Activated CD4-positive, alpha-beta T cell treated with anti-CD3 and anti-CD28 coated beads for 36 hours (primary cell): ENCODE measurements at regions of chr12 and their contacts with region 1.

Region 1: GRCh38 chr12:55996715-55997534 is at the start of gene SUOX:
- DNase-seq: peak; percentile 65
- ATAC-seq: peak; percentile 87
- H3K4me3 Mint-ChIP-seq: peak within 1 kb of the TSS; percentile 56
- H3K27ac Mint-ChIP-seq: peak within 1 kb of the TSS; percentile 37
- H3K4me1 Mint-ChIP-seq: peaks cover 20% of the 10 kb centered on the region
- H3K27me3 Mint-ChIP-seq: peaks cover 3% of the 10 kb centered on the region
- total RNA-seq, gene SUOX: 2.9 to 3.4 TPM

Region 2: DNA sequence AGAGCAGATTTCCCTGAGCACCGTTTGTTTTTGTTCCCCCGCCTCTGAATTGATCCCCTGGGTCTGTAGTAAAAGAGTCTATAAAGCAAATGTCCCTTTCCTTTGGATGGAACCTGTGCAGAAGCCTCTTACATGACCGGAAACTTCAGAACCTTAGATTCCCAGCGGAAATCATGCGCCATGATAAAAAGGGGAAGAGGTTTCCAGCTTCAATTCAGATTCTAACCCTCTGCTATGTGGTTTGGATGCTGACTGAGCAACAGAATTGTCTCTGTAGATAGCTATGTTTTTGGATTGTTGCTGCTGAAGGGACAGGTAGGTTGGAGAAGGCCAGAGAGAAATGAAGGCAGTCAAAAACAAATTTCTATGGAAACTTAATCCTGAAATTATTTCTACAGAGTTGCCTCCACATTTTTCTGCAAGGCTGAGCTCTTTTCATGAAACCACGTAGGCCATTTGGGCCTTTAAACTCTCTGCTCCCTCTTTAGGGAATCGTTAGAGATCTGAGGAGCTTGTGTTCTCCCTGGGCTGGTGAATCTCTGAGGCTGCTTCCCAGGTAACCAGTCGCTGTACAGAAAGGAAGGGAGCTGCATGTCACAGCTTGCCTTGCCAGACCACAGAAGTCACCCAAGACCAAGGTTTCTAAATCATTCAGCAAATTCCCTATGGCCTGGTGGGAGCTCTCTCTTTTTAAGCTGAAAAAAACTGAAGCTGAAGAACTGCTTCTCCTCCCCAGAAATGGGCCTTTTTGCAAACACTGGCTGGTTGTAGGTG is 388.9 kb before region 1 on chr12:
- CTCF ChIA-PET with region 1: no interaction called
- POLR2A ChIA-PET with region 1: no interaction called
- intact Hi-C with region 1: no loop called
- DNase-seq: no peak
- ATAC-seq: no peak
- H3K4me3 Mint-ChIP-seq: no peak overlapping the region
- H3K27ac Mint-ChIP-seq: no peak overlapping the region
- H3K4me1 Mint-ChIP-seq: peaks cover 13% of the 10 kb centered on the region
- H3K27me3 Mint-ChIP-seq: peaks cover 19% of the 10 kb centered on the region

Region 3: DNA sequence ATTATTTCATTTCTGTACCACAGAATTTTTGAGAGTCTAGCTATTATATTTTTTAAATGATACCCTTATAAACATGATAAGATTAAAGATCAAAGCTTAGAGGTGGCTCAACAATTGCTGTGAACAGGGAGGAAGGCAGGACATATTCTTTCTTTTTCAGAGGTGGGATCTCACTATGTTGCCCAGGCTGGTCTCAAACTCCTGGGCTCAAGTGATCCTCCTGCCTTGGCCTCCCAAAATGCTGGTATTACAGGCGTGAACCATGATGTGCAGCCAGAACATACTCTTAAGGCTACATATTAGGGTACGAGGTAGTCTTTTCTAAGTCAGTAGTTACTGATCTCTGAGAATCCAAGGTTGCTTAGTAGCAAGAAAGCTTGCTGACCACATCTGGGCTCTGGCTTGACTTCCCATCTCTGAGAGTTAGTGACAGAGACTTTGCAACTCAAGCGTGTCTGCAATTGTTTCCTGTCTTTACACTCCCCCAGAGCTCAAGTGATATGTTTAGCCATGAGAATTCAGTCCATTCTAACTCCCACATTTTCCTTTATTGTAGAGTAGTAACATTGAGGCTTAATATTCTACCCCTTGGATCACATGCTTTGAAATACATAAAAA is 14.5 kb before region 1 on chr12:
- CTCF ChIA-PET with region 1: interaction called, 57 read pairs
- POLR2A ChIA-PET with region 1: interaction called, 6 read pairs
- intact Hi-C with region 1: no loop called
- DNase-seq: no peak
- ATAC-seq: no peak
- H3K4me3 Mint-ChIP-seq: no peak overlapping the region
- H3K27ac Mint-ChIP-seq: no peak overlapping the region
- H3K4me1 Mint-ChIP-seq: peaks cover 10% of the 10 kb centered on the region
- H3K27me3 Mint-ChIP-seq: no peaks in the 10 kb centered on the region

Region 4: GRCh38 chr12:56007564-56008559 is 10.9 kb after region 1 on chr12:
- CTCF ChIA-PET with region 1: interaction called, 13 read pairs
- POLR2A ChIA-PET with region 1: interaction called, 4 read pairs
- intact Hi-C with region 1: no loop called
- DNase-seq: peak; percentile 82
- ATAC-seq: peak; percentile 83
- H3K4me3 Mint-ChIP-seq: peak overlapping the region; percentile 78
- H3K27ac Mint-ChIP-seq: peak overlapping the region; percentile 92
- H3K4me1 Mint-ChIP-seq: peaks cover 28% of the 10 kb centered on the region
- H3K27me3 Mint-ChIP-seq: no peaks in the 10 kb centered on the region

Region 5: DNA sequence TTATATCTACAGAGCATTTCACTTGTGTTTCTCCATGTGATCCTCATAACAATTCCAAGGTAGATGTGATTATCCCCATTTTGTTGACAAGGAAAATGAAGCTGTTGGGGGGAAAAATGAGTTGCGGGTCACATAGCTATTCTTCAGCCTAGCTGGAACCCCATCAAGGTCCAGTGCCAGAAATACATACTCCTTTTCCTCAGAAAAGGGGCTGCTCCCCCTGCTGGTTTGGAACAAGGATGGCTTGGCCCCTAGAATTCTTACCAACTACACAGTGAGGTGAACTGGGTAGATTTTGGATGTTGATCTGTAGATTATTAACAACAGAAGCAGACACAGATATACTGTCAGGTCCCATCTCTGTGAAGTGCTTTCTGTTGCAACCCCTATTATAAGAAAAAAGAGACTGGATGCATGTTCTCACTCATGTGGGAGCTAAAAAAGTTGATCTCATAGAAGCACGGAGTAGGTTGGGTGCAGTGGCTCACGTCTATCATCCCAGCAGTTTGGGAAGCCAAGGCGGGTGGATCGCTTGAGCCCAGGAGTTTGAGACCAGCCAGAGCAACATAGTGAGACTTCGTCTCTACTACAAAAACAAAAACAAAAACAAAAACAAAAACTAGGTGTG is 32.9 kb after region 1 on chr12:
- CTCF ChIA-PET with region 1: interaction called, 69 read pairs
- POLR2A ChIA-PET with region 1: no interaction called
- intact Hi-C with region 1: loop called (anchors 1 kb)
- DNase-seq: peak; percentile 63
- ATAC-seq: peak; percentile 60
- H3K4me3 Mint-ChIP-seq: no peak overlapping the region
- H3K27ac Mint-ChIP-seq: no peak overlapping the region
- H3K4me1 Mint-ChIP-seq: peaks cover 29% of the 10 kb centered on the region
- H3K27me3 Mint-ChIP-seq: no peaks in the 10 kb centered on the region